Heart left ventricle (tissue), 16 donors: ENCODE measurements at regions of chr19 and their contacts with region 1.

Region 1: GRCh38 chr19:58326914-58327726 is at the start of gene ZSCAN22:
- DNase-seq: peak; percentile 97 to 99 (median 98)
- ATAC-seq: peak; percentile 97 to 98 (median 98)
- H3K4me3 ChIP-seq: peak within 1 kb of the TSS; percentile 44 to 98 (median 82)
- H3K27ac ChIP-seq: peak within 1 kb of the TSS; percentile 81 to 99 (median 96)
- H3K4me1 ChIP-seq: peaks cover 5 to 38% (median 17%) of the 10 kb centered on the region in 12 donors
- H3K27me3 ChIP-seq: no peaks in the 10 kb centered on the region
- CTCF ChIP-seq: peak in 1 of 12 donors; percentile 8
- POLR2A ChIP-seq: peak in 1 of 2 donors; percentile 54
- total RNA-seq, gene ZSCAN22: 1.1 to 3.1 (median 2.0) TPM

Region 2: GRCh38 chr19:58346961-58347931 is 20.1 kb after region 1 on chr19:
- intact Hi-C with region 1: no loop called
- DNase-seq: peak; percentile 44 to 90 (median 60)
- ATAC-seq: peak; percentile 52 to 92 (median 92)
- H3K4me3 ChIP-seq: peak overlapping the region; percentile 36 to 81 (median 54)
- H3K27ac ChIP-seq: peak overlapping the region; percentile 7 to 79 (median 58)
- H3K4me1 ChIP-seq: peaks cover 0 to 21% (median 11%) of the 10 kb centered on the region in 12 donors
- H3K27me3 ChIP-seq: peaks cover 14 to 64% (median 40%) of the 10 kb centered on the region in 9 donors
- CTCF ChIP-seq: no peak
- POLR2A ChIP-seq: peak in 1 of 2 donors; percentile 36

Region 3: DNA sequence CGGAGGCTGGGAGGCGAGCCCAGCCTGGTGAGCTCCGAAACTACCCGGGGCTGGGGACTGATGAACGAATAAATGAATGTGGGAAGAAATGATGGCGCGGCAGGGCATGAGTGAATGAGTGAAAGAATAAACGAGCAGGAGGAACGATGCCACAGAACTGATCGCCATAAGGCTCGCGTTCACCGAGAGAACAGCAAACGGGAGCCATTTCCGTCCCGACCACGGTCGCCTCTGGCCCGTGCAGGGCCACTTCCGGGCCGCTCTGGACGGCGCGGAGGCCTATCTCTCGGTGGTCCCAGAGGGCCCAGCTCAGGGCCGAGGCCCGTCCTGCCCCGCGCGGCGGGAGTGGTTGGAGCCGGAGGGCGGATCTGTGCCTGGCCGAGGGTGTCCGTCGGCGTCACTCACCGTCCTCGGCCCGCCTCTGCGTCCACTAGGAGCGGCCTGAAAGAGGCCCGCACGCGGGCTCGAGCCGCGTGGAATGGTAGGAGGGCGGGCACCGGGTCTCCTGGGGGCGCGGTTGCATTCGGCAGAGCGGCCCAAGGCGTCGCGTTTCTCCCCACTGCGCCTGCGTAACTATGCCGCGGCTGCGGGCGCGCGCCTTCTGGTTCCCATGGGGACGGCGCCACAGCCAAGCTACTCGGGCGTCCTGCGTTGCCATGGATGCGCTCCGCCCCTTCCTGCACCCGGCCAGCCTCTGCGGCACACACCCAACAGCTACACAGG is 35.3 kb after region 1 on chr19 and contains the start of gene ZNF497:
- intact Hi-C with region 1: loop called in 4 of 10 experiments (anchors 2 to 5 kb)
- DNase-seq: peak; percentile 97 to 99 (median 98)
- ATAC-seq: peak; percentile 94 to 97 (median 97)
- H3K4me3 ChIP-seq: peak within 1 kb of the TSS; percentile 54 to 92 (median 73)
- H3K27ac ChIP-seq: peak within 1 kb of the TSS; percentile 86 to 98 (median 90)
- H3K4me1 ChIP-seq: peaks cover 0 to 16% (median 6%) of the 10 kb centered on the region in 12 donors
- H3K27me3 ChIP-seq: peaks cover 0 to 22% (median 0%) of the 10 kb centered on the region in 9 donors
- CTCF ChIP-seq: peak in 2 of 12 donors; percentile 23 to 29
- POLR2A ChIP-seq: no peak
- total RNA-seq, gene ZNF497: 0.18 to 1.1 (median 0.46) TPM

Region 4: DNA sequence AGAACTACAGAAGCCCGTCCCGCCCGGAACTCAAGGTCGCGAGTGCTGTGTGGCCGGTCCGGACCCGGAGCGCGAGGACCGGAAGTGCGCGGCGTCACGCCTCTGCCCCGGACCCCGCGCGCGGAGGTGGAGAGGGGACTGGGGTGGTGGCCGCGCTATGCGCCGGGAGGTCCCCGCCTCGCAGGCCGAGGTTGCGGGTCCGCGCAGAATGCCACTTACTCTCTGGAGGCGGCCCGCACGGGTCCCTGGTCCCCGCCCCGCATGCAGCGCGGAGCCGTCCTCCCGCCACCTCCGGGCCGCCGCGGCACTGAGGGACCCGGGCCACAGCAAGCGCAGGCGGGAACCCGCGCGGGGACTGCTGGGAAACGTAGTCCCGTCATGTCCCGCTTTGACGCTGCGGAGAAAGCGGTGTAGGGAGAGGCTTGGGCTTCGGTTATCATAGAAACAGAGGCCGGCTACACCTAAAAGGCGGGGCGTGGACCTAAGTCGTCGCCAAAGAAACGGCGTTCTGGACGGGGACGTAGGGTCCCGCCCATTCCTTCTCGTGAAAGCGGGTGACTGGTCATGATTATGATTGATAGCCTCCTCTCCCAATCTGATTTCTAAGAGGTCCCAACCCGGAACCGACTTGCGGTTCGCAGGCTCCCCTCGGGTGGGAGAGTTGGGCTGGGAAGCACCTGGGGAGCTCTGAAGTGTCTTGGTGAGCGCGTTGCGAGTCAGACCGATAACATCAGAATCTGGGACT is 53.8 kb after region 1 on chr19 and contains the start of gene ZNF837:
- intact Hi-C with region 1: loop called in 4 of 10 experiments (anchors 1 to 5 kb)
- DNase-seq: peak; percentile 99 to 100 (median 99)
- ATAC-seq: peak; percentile 95 to 96 (median 96)
- H3K4me3 ChIP-seq: peak within 1 kb of the TSS; percentile 57 to 94 (median 83)
- H3K27ac ChIP-seq: peak within 1 kb of the TSS; percentile 85 to 98 (median 95)
- H3K4me1 ChIP-seq: peaks cover 2 to 33% (median 25%) of the 10 kb centered on the region in 12 donors
- H3K27me3 ChIP-seq: no peaks in the 10 kb centered on the region
- CTCF ChIP-seq: no peak
- POLR2A ChIP-seq: peak in 1 of 2 donors; percentile 75
- total RNA-seq, gene ZNF837: 0.17 to 0.75 (median 0.63) TPM in 7 of 9 donors, not detected in the others

Region 5: DNA sequence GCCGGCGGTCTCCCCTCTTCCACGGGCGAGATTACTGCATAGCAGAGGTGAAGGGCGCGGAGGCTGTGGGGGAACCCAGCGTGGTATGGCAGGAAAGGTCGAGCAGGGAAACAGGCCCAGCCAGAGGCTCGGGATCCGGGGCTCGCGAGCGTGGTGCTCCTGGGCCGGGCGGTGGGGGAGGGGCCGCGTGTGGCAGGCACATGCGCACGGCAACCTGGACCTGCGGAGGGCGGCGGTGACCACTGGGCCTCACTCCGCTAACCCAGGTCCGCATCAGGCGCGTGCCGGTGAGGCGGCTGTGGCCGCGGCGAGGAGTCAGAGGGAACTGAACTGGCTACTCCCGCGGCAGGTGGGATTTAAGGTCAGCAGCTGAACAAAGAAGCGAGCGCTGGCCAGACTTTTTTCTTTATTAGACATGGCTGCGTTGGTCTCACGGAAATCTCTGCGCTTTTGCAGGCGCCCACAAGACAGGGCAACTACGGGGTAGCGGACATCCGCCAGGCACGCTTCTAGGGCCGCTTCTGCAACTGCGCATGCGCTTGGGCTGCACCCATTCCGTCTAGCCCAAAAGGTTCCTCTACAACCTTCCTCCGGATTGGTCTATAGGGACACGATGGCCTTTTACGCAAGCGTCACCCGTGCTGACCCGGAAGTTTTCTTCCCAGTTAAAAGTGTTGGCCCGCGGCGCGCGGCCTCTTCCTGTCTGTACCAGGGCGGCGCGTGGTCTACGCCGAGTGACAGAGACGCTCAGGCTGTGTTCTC is 59.6 kb after region 1 on chr19 and contains the start of gene RPS5:
- intact Hi-C with region 1: loop called in 3 of 10 experiments (anchors 2 to 5 kb)
- DNase-seq: peak; percentile 97
- ATAC-seq: peak; percentile 95 to 97 (median 96)
- H3K4me3 ChIP-seq: peak within 1 kb of the TSS; percentile 60 to 99 (median 77)
- H3K27ac ChIP-seq: peak within 1 kb of the TSS; percentile 81 to 99 (median 97)
- H3K4me1 ChIP-seq: peaks cover 5 to 42% (median 29%) of the 10 kb centered on the region in 12 donors
- H3K27me3 ChIP-seq: no peaks in the 10 kb centered on the region
- CTCF ChIP-seq: no peak
- POLR2A ChIP-seq: peak in 1 of 2 donors; percentile 67
- total RNA-seq, gene RPS5: 346 to 753 (median 485) TPM